Activated CD4-positive, alpha-beta T cell treated with anti-CD3 and anti-CD28 coated beads, Interleukin-2, amount 10 ng/mL, durations not matched to agents 24 days and 14 days (primary cell): ENCODE measurements at regions of chr6 and their contacts with region 1.

Region 1: GRCh38 chr6:157845493-157846259 is 22.6 kb downstream of the SNX9 start:
- DNase-seq: no peak
- H3K4me3 Mint-ChIP-seq: peak overlapping the region; percentile 7
- H3K27ac Mint-ChIP-seq: no peak overlapping the region
- H3K4me1 Mint-ChIP-seq: peaks cover 46% of the 10 kb centered on the region
- H3K27me3 Mint-ChIP-seq: no peaks in the 10 kb centered on the region

Region 2: GRCh38 chr6:157861814-157862213 is 16.1 kb after region 1 on chr6:
- intact Hi-C with region 1: loop called (anchors 2 kb)
- DNase-seq: no peak
- H3K4me3 Mint-ChIP-seq: no peak overlapping the region
- H3K27ac Mint-ChIP-seq: no peak overlapping the region
- H3K4me1 Mint-ChIP-seq: peaks cover 42% of the 10 kb centered on the region
- H3K27me3 Mint-ChIP-seq: peaks cover 35% of the 10 kb centered on the region